ENCODE measurements at regions of chr1 and their contacts with region 1.

Region 1: GRCh38 chr1:207698822-207699483 is 52.9 kb upstream of the CD46 start:
- DNase-seq: peak in 1 of 2 experiments; percentile 81
- ATAC-seq: peak; percentile 86 to 95
- H3K4me3 ChIP-seq: no peak overlapping the region
- H3K27ac ChIP-seq: no peak overlapping the region
- H3K4me1 ChIP-seq: no peaks in the 10 kb centered on the region
- CTCF ChIP-seq: peak; percentile 75
- EP300 ChIP-seq: no peak
- POLR2A ChIP-seq: no peak
- RAD21 ChIP-seq: peak; percentile 66 to 76

Region 2: GRCh38 chr1:207711285-207711684 is 12.3 kb after region 1 on chr1:
- CTCF ChIA-PET with region 1: interaction called, 11 read pairs
- POLR2A ChIA-PET with region 1: no interaction called
- DNase-seq: peak; percentile 27 to 59
- ATAC-seq: peak; percentile 70 to 84; a peak in 5 of 6 replicates
- H3K4me3 ChIP-seq: no peak overlapping the region
- H3K27ac ChIP-seq: no peak overlapping the region
- H3K4me1 ChIP-seq: peaks cover 7% of the 10 kb centered on the region; the same call in 1 of the 3 replicates
- CTCF ChIP-seq: no peak
- EP300 ChIP-seq: no peak
- POLR2A ChIP-seq: no peak
- RAD21 ChIP-seq: no peak